Caco-2 (cell line): ENCODE measurements at regions of chr19 and their contacts with region 1.

Region 1: DNA sequence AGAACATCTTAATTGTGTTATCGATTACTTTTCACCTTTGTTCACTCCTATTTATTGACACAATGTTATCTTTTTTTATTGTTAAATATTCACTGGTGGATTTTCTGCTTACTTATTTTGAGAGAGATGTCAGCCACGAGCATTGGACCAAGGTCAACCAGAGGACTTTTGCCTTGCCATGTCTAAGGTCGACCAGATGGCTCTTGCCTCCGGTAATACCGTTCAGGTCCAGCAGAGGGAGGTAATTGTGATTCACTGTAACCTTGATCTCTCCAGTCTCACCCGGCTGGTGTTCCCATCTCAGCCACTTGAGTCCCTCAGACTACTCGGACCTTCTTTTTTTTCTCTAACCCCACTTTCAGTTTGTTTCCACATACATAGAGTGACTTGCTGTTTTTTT is 1438.1 kb downstream of the UQCRFS1 start:
- DNase-seq: peak in 1 of 2 experiments; percentile 63
- H3K4me3 ChIP-seq: no peak overlapping the region
- H3K4me3 Mint-ChIP-seq: no peak overlapping the region
- H3K27ac Mint-ChIP-seq: no peak overlapping the region
- H3K4me1 ChIP-seq: no peaks in the 10 kb centered on the region
- H3K4me1 Mint-ChIP-seq: no peaks in the 10 kb centered on the region
- H3K27me3 ChIP-seq: no peaks in the 10 kb centered on the region
- H3K27me3 Mint-ChIP-seq: no peaks in the 10 kb centered on the region
- CTCF ChIP-seq: peak; percentile 25 to 53

Region 2: GRCh38 chr19:27793644-27794493 is 19.0 kb after region 1 on chr19:
- CTCF ChIA-PET with region 1: interaction called, 3 read pairs
- POLR2A ChIA-PET with region 1: no interaction called
- intact Hi-C with region 1: loop called (anchors 1 kb)
- DNase-seq: peak; percentile 93 to 96
- H3K4me3 ChIP-seq: peak overlapping the region; percentile 73
- H3K4me3 Mint-ChIP-seq: peak overlapping the region; percentile 82
- H3K27ac Mint-ChIP-seq: peak overlapping the region; percentile 69
- H3K4me1 ChIP-seq: no peaks in the 10 kb centered on the region
- H3K4me1 Mint-ChIP-seq: peaks cover 6% of the 10 kb centered on the region
- H3K27me3 ChIP-seq: no peaks in the 10 kb centered on the region
- H3K27me3 Mint-ChIP-seq: no peaks in the 10 kb centered on the region
- CTCF ChIP-seq: no peak

Region 3: DNA sequence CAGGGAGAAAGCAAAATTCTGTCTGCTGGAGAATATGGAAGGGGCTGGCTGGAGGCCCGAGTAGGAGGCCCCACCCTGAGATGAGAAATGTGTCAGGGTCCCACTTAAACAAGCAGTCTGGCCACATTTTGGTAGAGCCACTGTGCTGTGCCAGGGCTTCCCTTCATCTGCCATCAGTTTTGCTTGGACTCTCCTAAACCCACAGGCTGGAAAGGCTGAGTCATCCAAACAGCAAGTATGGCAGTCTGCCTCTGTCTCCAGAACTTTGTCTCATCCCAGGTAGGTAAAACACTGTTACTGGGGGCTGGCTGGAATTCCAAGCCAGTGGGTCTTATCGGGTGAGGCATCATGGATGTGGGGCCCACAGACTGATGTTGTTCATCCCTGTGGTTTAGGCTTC is 47.5 kb after region 1 on chr19:
- CTCF ChIA-PET with region 1: no interaction called
- POLR2A ChIA-PET with region 1: no interaction called
- intact Hi-C with region 1: no loop called
- DNase-seq: no peak
- H3K4me3 ChIP-seq: no peak overlapping the region
- H3K4me3 Mint-ChIP-seq: no peak overlapping the region
- H3K27ac Mint-ChIP-seq: no peak overlapping the region
- H3K4me1 ChIP-seq: no peaks in the 10 kb centered on the region
- H3K4me1 Mint-ChIP-seq: no peaks in the 10 kb centered on the region
- H3K27me3 ChIP-seq: no peaks in the 10 kb centered on the region
- H3K27me3 Mint-ChIP-seq: no peaks in the 10 kb centered on the region
- CTCF ChIP-seq: no peak